Activated naive CD4-positive, alpha-beta T cell treated with anti-CD3 and anti-CD28 coated beads for 36 hours (primary cell): ENCODE measurements at regions of chr3 and their contacts with region 1.

Region 1: GRCh38 chr3:122101646-122102045 is 46.5 kb downstream of the CD86 start:
- DNase-seq: peak; percentile 18
- H3K4me3 Mint-ChIP-seq: peak overlapping the region; percentile 5
- H3K27ac Mint-ChIP-seq: peak overlapping the region; percentile 60
- H3K4me1 Mint-ChIP-seq: peaks cover 39% of the 10 kb centered on the region
- H3K27me3 Mint-ChIP-seq: no peaks in the 10 kb centered on the region

Region 2: DNA sequence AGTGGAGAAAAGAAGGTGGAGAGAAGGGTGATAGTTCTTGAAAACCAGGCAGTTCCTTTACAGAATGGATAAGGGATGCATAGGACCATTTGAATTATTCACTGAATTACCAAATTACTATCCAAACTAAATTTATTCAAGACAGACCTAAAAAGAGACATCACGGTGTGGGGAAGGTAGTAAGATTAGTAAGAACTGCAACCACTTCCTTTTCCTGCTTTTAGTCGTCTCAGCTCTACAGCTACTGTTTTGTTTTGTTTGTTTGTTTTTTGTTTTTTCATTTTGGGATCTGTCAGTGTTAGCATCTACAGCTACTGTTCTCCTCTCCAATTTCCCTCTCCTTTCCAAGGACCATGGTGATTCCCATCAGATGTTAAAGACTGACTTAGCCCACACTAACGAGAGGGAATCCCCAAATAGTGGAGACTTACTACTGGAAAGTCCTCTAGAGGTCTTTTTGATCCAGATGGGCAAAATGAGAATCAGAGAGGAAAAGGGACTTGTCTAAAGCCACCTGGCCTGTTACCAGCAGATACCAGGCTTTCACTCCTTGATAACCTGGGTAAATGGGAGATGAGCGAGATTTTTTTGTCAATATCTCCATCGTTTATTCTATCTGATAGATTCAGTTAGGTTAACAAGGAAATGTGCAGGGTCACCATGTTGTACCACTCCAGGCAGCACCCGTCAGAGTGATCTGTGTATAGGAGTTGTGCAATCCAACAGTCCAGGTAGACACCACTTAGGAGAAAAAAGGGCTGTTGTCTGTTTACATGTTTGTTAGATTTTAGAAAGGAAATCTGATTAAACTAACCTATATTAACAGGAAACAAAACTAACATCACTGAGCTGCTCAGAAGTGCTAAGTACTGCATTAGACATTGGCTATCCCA is 446.9 kb before region 1 on chr3:
- CTCF ChIA-PET with region 1: no interaction called
- intact Hi-C with region 1: loop called (anchors 5 kb)
- DNase-seq: no peak
- H3K4me3 Mint-ChIP-seq: peak overlapping the region; percentile 30
- H3K27ac Mint-ChIP-seq: peak overlapping the region; percentile 86
- H3K4me1 Mint-ChIP-seq: peaks cover 79% of the 10 kb centered on the region
- H3K27me3 Mint-ChIP-seq: no peaks in the 10 kb centered on the region

Region 3: GRCh38 chr3:122111974-122112373 is 10.3 kb after region 1 on chr3:
- CTCF ChIA-PET with region 1: interaction called, 11 read pairs
- intact Hi-C with region 1: no loop called
- DNase-seq: no peak
- H3K4me3 Mint-ChIP-seq: no peak overlapping the region
- H3K27ac Mint-ChIP-seq: no peak overlapping the region
- H3K4me1 Mint-ChIP-seq: no peaks in the 10 kb centered on the region
- H3K27me3 Mint-ChIP-seq: peaks cover 17% of the 10 kb centered on the region

Region 4: GRCh38 chr3:122132949-122133540 is 31.4 kb after region 1 on chr3:
- CTCF ChIA-PET with region 1: no interaction called
- intact Hi-C with region 1: no loop called
- DNase-seq: no peak
- H3K4me3 Mint-ChIP-seq: no peak overlapping the region
- H3K27ac Mint-ChIP-seq: no peak overlapping the region
- H3K4me1 Mint-ChIP-seq: no peaks in the 10 kb centered on the region
- H3K27me3 Mint-ChIP-seq: peaks cover 12% of the 10 kb centered on the region

Region 5: GRCh38 chr3:122258757-122259371 is 157.2 kb after region 1 on chr3:
- CTCF ChIA-PET with region 1: interaction called, 58 read pairs
- intact Hi-C with region 1: loop called (anchors 1 kb)
- DNase-seq: peak; percentile 85
- H3K4me3 Mint-ChIP-seq: no peak overlapping the region
- H3K27ac Mint-ChIP-seq: no peak overlapping the region
- H3K4me1 Mint-ChIP-seq: peaks cover 14% of the 10 kb centered on the region
- H3K27me3 Mint-ChIP-seq: peaks cover 10% of the 10 kb centered on the region

Region 6: GRCh38 chr3:122305818-122306621 is 204.4 kb after region 1 on chr3:
- CTCF ChIA-PET with region 1: interaction called, 31 read pairs
- intact Hi-C with region 1: no loop called
- DNase-seq: peak; percentile 32
- H3K4me3 Mint-ChIP-seq: no peak overlapping the region
- H3K27ac Mint-ChIP-seq: no peak overlapping the region
- H3K4me1 Mint-ChIP-seq: no peaks in the 10 kb centered on the region
- H3K27me3 Mint-ChIP-seq: peaks cover 1% of the 10 kb centered on the region

Region 7: GRCh38 chr3:122514123-122515019 is 412.7 kb after region 1 on chr3 and contains the start of gene KPNA1:
- CTCF ChIA-PET with region 1: no interaction called
- intact Hi-C with region 1: loop called (anchors 10 kb)
- DNase-seq: peak; percentile 86
- H3K4me3 Mint-ChIP-seq: peak within 1 kb of the TSS; percentile 73
- H3K27ac Mint-ChIP-seq: peak within 1 kb of the TSS; percentile 77
- H3K4me1 Mint-ChIP-seq: peaks cover 42% of the 10 kb centered on the region
- H3K27me3 Mint-ChIP-seq: no peaks in the 10 kb centered on the region
- total RNA-seq, gene KPNA1: 45.6 to 45.8 TPM

Region 8: GRCh38 chr3:123028233-123028828 is 926.7 kb after region 1 on chr3:
- CTCF ChIA-PET with region 1: no interaction called
- intact Hi-C with region 1: loop called (anchors 5 kb)
- DNase-seq: peak; percentile 36
- H3K4me3 Mint-ChIP-seq: peak overlapping the region; percentile 55
- H3K27ac Mint-ChIP-seq: no peak overlapping the region
- H3K4me1 Mint-ChIP-seq: peaks cover 11% of the 10 kb centered on the region
- H3K27me3 Mint-ChIP-seq: peaks cover 55% of the 10 kb centered on the region